Natural killer cell (primary cell): ENCODE measurements at regions of chr14 and their contacts with region 1.

Region 1: GRCh38 chr14:23562268-23563203 is 5.1 kb downstream of the AP1G2 start:
- DNase-seq: peak; percentile 39 to 82
- ATAC-seq: peak; percentile 49 to 59 (median 57)
- H3K4me3 ChIP-seq: no peak overlapping the region
- H3K4me3 Mint-ChIP-seq: peak overlapping the region; percentile 28
- H3K27ac ChIP-seq: no peak overlapping the region
- H3K27ac Mint-ChIP-seq: peak overlapping the region in 1 of 2 donors; percentile 61
- H3K4me1 ChIP-seq: peaks cover 13% of the 10 kb centered on the region
- H3K4me1 Mint-ChIP-seq: peaks cover 22 to 30% of the 10 kb centered on the region in 2 donors
- H3K27me3 ChIP-seq: no peaks in the 10 kb centered on the region
- H3K27me3 Mint-ChIP-seq: no peaks in the 10 kb centered on the region
- CTCF ChIP-seq: peak; percentile 85

Region 2: GRCh38 chr14:23327947-23328744 is 234.4 kb before region 1 on chr14:
- intact Hi-C with region 1: loop called (anchors 5 kb)
- DNase-seq: peak in 1 of 2 donors; percentile 86
- ATAC-seq: peak; percentile 73 to 92 (median 86)
- H3K4me3 ChIP-seq: no peak overlapping the region
- H3K4me3 Mint-ChIP-seq: no peak overlapping the region
- H3K27ac ChIP-seq: no peak overlapping the region
- H3K27ac Mint-ChIP-seq: no peak overlapping the region
- H3K4me1 ChIP-seq: peaks cover under 1% of the 10 kb centered on the region
- H3K4me1 Mint-ChIP-seq: peaks cover 3 to 4% of the 10 kb centered on the region in 2 donors
- H3K27me3 ChIP-seq: no peaks in the 10 kb centered on the region
- H3K27me3 Mint-ChIP-seq: no peaks in the 10 kb centered on the region
- CTCF ChIP-seq: peak; percentile 92

Region 3: GRCh38 chr14:23478111-23478759 is 84.3 kb before region 1 on chr14:
- intact Hi-C with region 1: loop called (anchors 1 kb)
- DNase-seq: peak; percentile 47 to 83
- ATAC-seq: peak; percentile 74 to 96 (median 75)
- H3K4me3 ChIP-seq: no peak overlapping the region
- H3K4me3 Mint-ChIP-seq: no peak overlapping the region
- H3K27ac ChIP-seq: no peak overlapping the region
- H3K27ac Mint-ChIP-seq: peak overlapping the region; percentile 46 to 60
- H3K4me1 ChIP-seq: no peaks in the 10 kb centered on the region
- H3K4me1 Mint-ChIP-seq: peaks cover 0 to 7% of the 10 kb centered on the region in 2 donors
- H3K27me3 ChIP-seq: no peaks in the 10 kb centered on the region
- H3K27me3 Mint-ChIP-seq: no peaks in the 10 kb centered on the region
- CTCF ChIP-seq: peak; percentile 68